ENCODE measurements at regions of chr19 and their contacts with region 1.

Region 1: GRCh38 chr19:3700221-3701032 is at the start of gene PIP5K1C:
- DNase-seq: peak; percentile 78
- ATAC-seq: peak; percentile 97
- H3K4me3 ChIP-seq: peak within 1 kb of the TSS; percentile 97
- H3K27ac ChIP-seq: peak within 1 kb of the TSS; percentile 77
- H3K4me1 ChIP-seq: peaks cover 8% of the 10 kb centered on the region; the same call in 1 of the 2 replicates
- H3K27me3 ChIP-seq: peaks cover 2% of the 10 kb centered on the region; the same call in 1 of the 2 replicates
- CTCF ChIP-seq: peak; percentile 87
- POLR2A ChIP-seq: peak; percentile 39; the same call in 1 of the 2 replicates
- RAD21 ChIP-seq: peak; percentile 70
- total RNA-seq, gene PIP5K1C: 10.8 and 13.6 TPM in 2 replicates

Region 2: DNA sequence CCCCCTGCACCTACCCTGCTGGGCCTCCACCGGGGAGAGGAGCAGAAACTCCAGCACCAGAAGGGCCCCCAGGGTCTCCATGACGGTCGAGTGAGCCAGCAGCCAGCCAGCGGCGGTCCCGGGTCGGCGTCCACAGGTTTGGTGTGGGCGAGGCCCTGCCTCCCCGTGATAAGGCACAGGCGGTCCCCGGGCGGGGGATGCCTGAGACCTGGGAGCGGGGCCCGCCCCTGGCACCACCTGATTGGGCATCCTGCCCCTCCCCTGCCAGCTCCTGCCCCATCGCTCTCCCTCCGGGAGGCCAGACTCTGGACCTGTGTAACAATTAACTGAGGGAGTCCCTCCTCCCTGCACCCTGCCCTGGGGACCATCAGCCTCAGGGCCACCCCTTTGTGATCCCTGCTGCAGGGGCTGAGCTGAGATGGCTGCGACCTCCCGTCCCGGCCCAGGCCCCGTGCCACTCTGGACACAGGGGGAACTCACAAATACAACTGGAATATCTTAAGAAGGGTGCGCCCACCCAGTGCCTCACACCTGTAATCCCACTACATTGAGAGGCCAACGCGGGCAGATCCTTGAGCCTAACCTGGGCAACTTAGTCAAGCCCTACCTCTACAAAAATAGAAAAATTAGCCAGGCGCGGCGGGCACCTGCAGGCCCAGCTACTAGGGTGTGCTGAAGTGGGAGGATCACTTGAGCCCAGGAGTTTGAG is 219.9 kb before region 1 on chr19 and contains the start of gene SMIM24:
- CTCF ChIA-PET with region 1: no interaction called
- POLR2A ChIA-PET with region 1: no interaction called
- dilution Hi-C with region 1: no loop called
- in situ Hi-C with region 1: no loop called
- intact Hi-C with region 1: no loop called
- DNase-seq: no peak
- ATAC-seq: no peak
- H3K4me3 ChIP-seq: no peak within 1 kb of the TSS
- H3K27ac ChIP-seq: no peak within 1 kb of the TSS
- H3K4me1 ChIP-seq: no peaks in the 10 kb centered on the region
- H3K27me3 ChIP-seq: peaks cover 38% of the 10 kb centered on the region
- CTCF ChIP-seq: no peak
- POLR2A ChIP-seq: no peak
- RAD21 ChIP-seq: no peak
- total RNA-seq, gene SMIM24: not detected in 2 replicates

Region 3: GRCh38 chr19:3670796-3671679 is 29.4 kb before region 1 on chr19:
- CTCF ChIA-PET with region 1: no interaction called
- POLR2A ChIA-PET with region 1: no interaction called
- dilution Hi-C with region 1: no loop called
- in situ Hi-C with region 1: loop called (anchors 5 kb)
- intact Hi-C with region 1: loop called (anchors 1 kb)
- DNase-seq: peak; percentile 56
- ATAC-seq: peak; percentile 58
- H3K4me3 ChIP-seq: no peak overlapping the region
- H3K27ac ChIP-seq: peak overlapping the region; percentile 77
- H3K4me1 ChIP-seq: peaks cover 27% of the 10 kb centered on the region
- H3K27me3 ChIP-seq: no peaks in the 10 kb centered on the region
- CTCF ChIP-seq: no peak
- POLR2A ChIP-seq: 0 out of 2 replicates have a peak, but pooled peaks have one; percentile 5
- RAD21 ChIP-seq: no peak

Measured in IMR-90 (cell line).